Activated CD4-positive, alpha-beta T cell treated with anti-CD3 and anti-CD28 coated beads, Interleukin-2, amount 10 ng/mL, durations not matched to agents 24 days and 14 days (primary cell): ENCODE measurements at regions of chr1 and their contacts with region 1.

Region 1: GRCh38 chr1:172708452-172708851 is 49.5 kb downstream of the FASLG start:
- DNase-seq: peak; percentile 87
- H3K4me3 Mint-ChIP-seq: peak overlapping the region; percentile 56
- H3K27ac Mint-ChIP-seq: peak overlapping the region; percentile 88
- H3K4me1 Mint-ChIP-seq: peaks cover 49% of the 10 kb centered on the region
- H3K27me3 Mint-ChIP-seq: peaks cover 2% of the 10 kb centered on the region

Region 2: GRCh38 chr1:172154551-172154950 is 553.9 kb before region 1 on chr1:
- intact Hi-C with region 1: loop called (anchors 10 kb)
- DNase-seq: no peak
- H3K4me3 Mint-ChIP-seq: peak overlapping the region; percentile 66
- H3K27ac Mint-ChIP-seq: peak overlapping the region; percentile 95
- H3K4me1 Mint-ChIP-seq: peaks cover 9% of the 10 kb centered on the region
- H3K27me3 Mint-ChIP-seq: no peaks in the 10 kb centered on the region

Region 3: DNA sequence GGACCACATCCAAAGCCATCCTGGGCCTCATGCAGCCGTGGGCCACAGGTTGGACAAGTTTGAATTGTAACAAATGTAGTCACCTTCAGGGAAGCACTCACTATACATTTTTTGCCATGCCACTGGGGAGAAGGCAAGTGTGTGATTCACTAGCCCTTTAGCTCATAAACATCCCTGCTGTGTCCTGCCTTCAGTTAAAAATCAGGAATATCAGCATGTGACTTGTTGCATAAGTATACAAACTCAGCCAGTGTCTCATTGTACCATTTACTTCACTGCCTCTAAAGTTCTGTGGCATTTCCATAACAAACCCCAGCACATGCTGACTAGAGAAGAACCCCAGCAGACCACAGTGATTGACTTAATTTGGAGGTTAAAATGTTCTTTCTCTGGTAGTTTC is 430.0 kb before region 1 on chr1:
- intact Hi-C with region 1: loop called (anchors 10 kb)
- DNase-seq: no peak
- H3K4me3 Mint-ChIP-seq: no peak overlapping the region
- H3K27ac Mint-ChIP-seq: no peak overlapping the region
- H3K4me1 Mint-ChIP-seq: peaks cover 14% of the 10 kb centered on the region
- H3K27me3 Mint-ChIP-seq: no peaks in the 10 kb centered on the region

Region 4: GRCh38 chr1:172671591-172671990 is 36.9 kb before region 1 on chr1:
- intact Hi-C with region 1: loop called (anchors 1 kb)
- DNase-seq: no peak
- H3K4me3 Mint-ChIP-seq: peak overlapping the region; percentile 24
- H3K27ac Mint-ChIP-seq: no peak overlapping the region
- H3K4me1 Mint-ChIP-seq: peaks cover 79% of the 10 kb centered on the region
- H3K27me3 Mint-ChIP-seq: no peaks in the 10 kb centered on the region

Region 5: DNA sequence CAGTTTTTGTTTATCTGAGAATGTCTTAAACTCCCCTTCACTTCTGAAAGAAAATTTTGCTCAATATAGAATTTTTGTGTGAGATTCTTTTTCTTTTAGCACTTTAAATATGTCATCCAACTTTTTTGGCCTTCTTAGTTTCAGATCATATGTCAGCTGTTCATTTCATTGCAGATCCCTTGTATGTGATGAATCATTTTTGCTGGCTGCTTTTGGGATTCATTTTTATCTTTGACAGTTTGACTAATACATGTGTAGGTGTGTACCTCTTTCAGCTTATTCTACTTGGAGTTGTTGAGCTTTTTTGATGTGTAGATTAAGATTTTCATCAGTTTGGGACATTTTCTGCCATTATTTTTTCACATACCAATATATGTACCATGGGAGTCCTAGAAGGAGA is 107.3 kb after region 1 on chr1:
- intact Hi-C with region 1: no loop called
- DNase-seq: no peak
- H3K4me3 Mint-ChIP-seq: no peak overlapping the region
- H3K27ac Mint-ChIP-seq: no peak overlapping the region
- H3K4me1 Mint-ChIP-seq: peaks cover 41% of the 10 kb centered on the region
- H3K27me3 Mint-ChIP-seq: peaks cover 6% of the 10 kb centered on the region

Region 6: GRCh38 chr1:173693238-173693637 is 984.8 kb after region 1 on chr1:
- intact Hi-C with region 1: no loop called
- DNase-seq: no peak
- H3K4me3 Mint-ChIP-seq: no peak overlapping the region
- H3K27ac Mint-ChIP-seq: no peak overlapping the region
- H3K4me1 Mint-ChIP-seq: peaks cover 2% of the 10 kb centered on the region
- H3K27me3 Mint-ChIP-seq: peaks cover 14% of the 10 kb centered on the region